Aorta (tissue), 5 donors: ENCODE measurements at regions of chr4 and their contacts with region 1.

Region 1: GRCh38 chr4:109702950-109703663 is at the start of gene CASP6:
- DNase-seq: peak; percentile 92 to 94
- ATAC-seq: peak; percentile 96
- H3K4me3 ChIP-seq: peak within 1 kb of the TSS; percentile 87 to 91
- H3K27ac ChIP-seq: peak within 1 kb of the TSS in 1 of 2 donors; percentile 35
- H3K4me1 ChIP-seq: peaks cover 0 to 7% of the 10 kb centered on the region in 2 donors
- H3K27me3 ChIP-seq: no peaks in the 10 kb centered on the region
- total RNA-seq, gene CASP6: 11.1 to 19.3 TPM

Region 2: GRCh38 chr4:109690690-109691410 is 12.3 kb before region 1 on chr4:
- intact Hi-C with region 1: no loop called
- DNase-seq: no peak
- ATAC-seq: no peak
- H3K4me3 ChIP-seq: no peak overlapping the region
- H3K27ac ChIP-seq: no peak overlapping the region
- H3K4me1 ChIP-seq: no peaks in the 10 kb centered on the region
- H3K27me3 ChIP-seq: no peaks in the 10 kb centered on the region

Region 3: GRCh38 chr4:109729718-109730618 is 26.9 kb after region 1 on chr4 and contains the start of gene PLA2G12A:
- intact Hi-C with region 1: loop called in 1 of 2 experiments (anchors 2 kb)
- DNase-seq: peak; percentile 74 to 86
- ATAC-seq: peak; percentile 94
- H3K4me3 ChIP-seq: peak within 1 kb of the TSS; percentile 71 to 91
- H3K27ac ChIP-seq: peak within 1 kb of the TSS in 1 of 2 donors; percentile 55
- H3K4me1 ChIP-seq: no peaks in the 10 kb centered on the region
- H3K27me3 ChIP-seq: no peaks in the 10 kb centered on the region
- total RNA-seq, gene PLA2G12A: 32.4 to 34.5 TPM

Region 4: GRCh38 chr4:109754093-109754857 is 51.2 kb after region 1 on chr4:
- intact Hi-C with region 1: no loop called
- DNase-seq: no peak
- ATAC-seq: no peak
- H3K4me3 ChIP-seq: no peak overlapping the region
- H3K27ac ChIP-seq: no peak overlapping the region
- H3K4me1 ChIP-seq: no peaks in the 10 kb centered on the region
- H3K27me3 ChIP-seq: no peaks in the 10 kb centered on the region

Region 5: GRCh38 chr4:109815151-109816081 is 112.3 kb after region 1 on chr4 and contains the start of gene GAR1:
- intact Hi-C with region 1: loop called (anchors 1 to 5 kb)
- DNase-seq: peak; percentile 92 to 94
- ATAC-seq: peak; percentile 98
- H3K4me3 ChIP-seq: peak within 1 kb of the TSS; percentile 51 to 57
- H3K27ac ChIP-seq: peak within 1 kb of the TSS in 1 of 2 donors; percentile 23
- H3K4me1 ChIP-seq: no peaks in the 10 kb centered on the region
- H3K27me3 ChIP-seq: no peaks in the 10 kb centered on the region
- total RNA-seq, gene GAR1: 9.8 to 11.3 TPM